ENCODE measurements at regions of chr3 and their contacts with region 1.

Region 1: DNA sequence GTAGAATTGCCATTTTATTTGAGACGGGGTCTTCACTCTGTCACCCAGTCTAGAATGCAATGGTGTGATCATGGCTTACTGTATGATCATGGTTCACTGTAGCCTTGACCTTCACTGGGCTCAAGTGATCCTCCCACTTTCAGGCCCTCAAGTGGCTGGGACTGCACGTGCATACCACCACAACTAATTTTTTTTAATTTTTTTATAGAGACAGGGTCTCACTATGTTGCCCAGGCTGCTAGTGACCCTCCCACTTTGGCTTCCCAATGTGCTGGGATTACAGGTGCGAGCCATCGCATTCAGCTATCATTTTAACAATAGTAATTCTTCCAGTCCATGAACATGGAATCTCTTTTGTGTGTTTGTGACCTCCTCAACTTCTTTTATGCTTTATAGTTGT is 11.9 kb downstream of the EPM2AIP1 start:
- DNase-seq: no peak
- H3K4me3 ChIP-seq: no peak overlapping the region
- H3K27ac ChIP-seq: no peak overlapping the region
- H3K4me1 ChIP-seq: no peaks in the 10 kb centered on the region
- H3K27me3 ChIP-seq: no peaks in the 10 kb centered on the region
- CTCF ChIP-seq: no peak

Region 2: GRCh38 chr3:36212251-36212650 is 768.8 kb before region 1 on chr3:
- CTCF ChIA-PET with region 1: no interaction called
- POLR2A ChIA-PET with region 1: interaction called, 10 read pairs
- intact Hi-C with region 1: no loop called
- DNase-seq: no peak
- H3K4me3 ChIP-seq: no peak overlapping the region
- H3K27ac ChIP-seq: no peak overlapping the region
- H3K4me1 ChIP-seq: peaks cover 10% of the 10 kb centered on the region
- H3K27me3 ChIP-seq: no peaks in the 10 kb centered on the region
- CTCF ChIP-seq: no peak

Region 3: GRCh38 chr3:36792342-36792741 is 188.7 kb before region 1 on chr3:
- CTCF ChIA-PET with region 1: no interaction called
- POLR2A ChIA-PET with region 1: no interaction called
- intact Hi-C with region 1: no loop called
- DNase-seq: peak in 1 of 2 experiments; percentile 13
- H3K4me3 ChIP-seq: no peak overlapping the region
- H3K27ac ChIP-seq: no peak overlapping the region
- H3K4me1 ChIP-seq: no peaks in the 10 kb centered on the region
- H3K27me3 ChIP-seq: no peaks in the 10 kb centered on the region
- CTCF ChIP-seq: peak; percentile 52

Measured in PC-9 (cell line).